ENCODE measurements at regions of chr9 and their contacts with region 1.

Region 1: GRCh38 chr9:76658535-76659231 is 105.6 kb upstream of the PCA3 start:
- DNase-seq: peak; percentile 81

Region 2: GRCh38 chr9:76441551-76442322 is 216.9 kb before region 1 on chr9:
- in situ Hi-C with region 1: loop called (anchors 10 kb)
- DNase-seq: no peak

Region 3: DNA sequence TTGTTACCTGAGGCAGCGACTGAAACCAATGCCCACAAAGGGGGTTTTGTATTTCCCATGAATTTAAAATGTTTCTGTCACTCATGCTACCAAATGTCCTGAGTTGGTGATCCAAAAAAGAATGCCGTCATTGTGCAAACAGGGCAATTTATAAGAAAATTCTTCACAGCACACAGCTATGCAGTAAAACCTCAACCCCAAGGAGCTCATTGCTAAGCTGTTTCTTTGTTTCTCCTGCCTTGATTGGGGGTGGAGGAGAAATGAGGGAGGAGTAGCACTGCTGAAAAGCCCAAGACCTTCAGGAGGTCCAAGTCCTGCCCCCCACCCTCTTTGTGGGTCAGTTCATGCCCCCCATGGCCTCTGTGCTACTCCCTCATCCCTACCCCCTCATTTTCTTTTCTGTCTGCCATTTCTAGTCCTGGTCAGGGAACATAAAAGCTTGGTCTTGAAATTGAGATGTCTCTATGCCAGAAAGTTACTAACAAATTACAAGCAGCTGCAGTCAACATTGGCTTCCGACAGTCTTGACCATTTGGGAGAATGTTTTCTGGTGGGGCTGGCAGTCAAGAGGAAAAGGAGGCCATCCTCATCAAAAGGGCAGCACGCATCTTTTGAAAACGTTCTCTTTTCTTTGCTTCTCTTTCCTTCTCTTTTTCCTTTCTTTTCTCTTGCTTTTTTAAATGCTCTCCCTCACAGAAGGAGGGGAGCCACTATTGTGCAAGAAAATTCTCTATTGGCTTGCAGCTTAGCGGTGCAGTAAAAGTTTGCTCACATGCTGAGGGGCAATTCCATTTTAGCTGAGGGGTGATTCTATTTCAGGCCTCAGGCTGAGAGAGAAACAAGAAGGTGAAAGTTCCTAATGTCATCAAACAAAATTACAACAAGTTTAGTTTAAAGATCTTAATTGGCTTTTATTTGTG is 66.3 kb before region 1 on chr9:
- in situ Hi-C with region 1: loop called (anchors 10 kb)
- DNase-seq: peak; percentile 44

Region 4: DNA sequence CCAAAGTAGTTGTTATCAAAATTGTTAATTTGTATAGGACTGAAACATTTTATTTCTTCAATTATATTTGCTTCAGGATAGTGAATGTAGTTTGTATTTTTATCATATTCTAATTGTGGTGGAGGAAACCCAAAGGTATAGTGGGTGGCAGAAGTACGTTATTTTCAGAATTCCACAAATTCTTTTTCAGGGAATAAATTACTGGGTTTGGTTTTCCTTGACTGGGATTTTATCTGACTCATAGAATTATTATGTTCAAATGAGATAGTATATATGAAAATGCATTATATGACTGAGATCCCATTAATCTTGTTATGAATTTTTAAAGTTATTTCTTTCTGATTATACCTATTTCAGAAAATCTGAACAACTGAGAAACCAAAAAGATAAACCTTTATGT is 592.4 kb after region 1 on chr9:
- in situ Hi-C with region 1: no loop called
- DNase-seq: no peak